Activated CD8-positive, alpha-beta T cell treated with anti-CD3 and anti-CD28 coated beads for 36 hours (primary cell): ENCODE measurements at regions of chr1 and their contacts with region 1.

Region 1: DNA sequence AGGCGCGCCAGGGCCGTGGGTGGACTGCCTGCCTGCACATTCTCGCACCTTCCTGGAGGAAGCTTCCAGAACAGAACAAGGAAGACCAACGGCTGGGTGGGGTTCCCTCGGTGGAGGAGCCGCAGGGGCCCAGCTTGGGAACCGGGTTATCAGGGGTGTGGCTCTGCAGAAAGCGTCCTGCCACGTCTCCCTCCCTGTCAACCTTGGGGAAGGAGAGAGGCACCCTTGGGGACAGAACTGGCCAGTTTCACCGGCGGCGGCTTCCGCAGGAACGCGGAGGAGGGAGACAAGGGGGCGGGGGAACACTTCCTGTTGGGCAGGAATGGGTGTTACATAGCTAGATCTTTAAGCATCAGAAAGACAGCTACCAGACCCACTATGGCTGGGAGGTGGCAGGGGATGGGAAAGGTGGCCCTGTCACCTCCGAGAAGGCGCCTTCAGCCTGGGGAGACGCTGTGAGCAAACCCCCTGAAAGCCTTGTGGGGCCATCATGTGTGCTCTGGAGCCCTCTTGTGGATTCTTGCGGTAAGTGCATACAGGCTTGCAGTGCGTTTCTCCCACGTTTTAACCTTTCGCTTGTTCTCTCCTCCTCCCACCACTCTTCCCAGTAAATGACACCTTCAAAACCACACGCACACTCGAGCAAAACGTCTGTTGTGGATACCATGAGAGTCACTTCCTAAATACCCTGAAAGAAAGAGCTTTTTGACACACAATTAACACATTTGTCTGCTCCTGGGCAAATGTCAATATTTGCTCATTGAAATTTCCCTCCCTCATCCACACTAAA is 3.8 kb upstream of the PLEKHA6 start:
- DNase-seq: peak; percentile 89
- ATAC-seq: peak; percentile 87
- H3K4me3 Mint-ChIP-seq: peak overlapping the region; percentile 51
- H3K27ac Mint-ChIP-seq: peak overlapping the region; percentile 80
- H3K4me1 Mint-ChIP-seq: peaks cover 46% of the 10 kb centered on the region
- H3K27me3 Mint-ChIP-seq: peaks cover 4% of the 10 kb centered on the region
- CTCF ChIP-seq: peak; percentile 95

Region 2: DNA sequence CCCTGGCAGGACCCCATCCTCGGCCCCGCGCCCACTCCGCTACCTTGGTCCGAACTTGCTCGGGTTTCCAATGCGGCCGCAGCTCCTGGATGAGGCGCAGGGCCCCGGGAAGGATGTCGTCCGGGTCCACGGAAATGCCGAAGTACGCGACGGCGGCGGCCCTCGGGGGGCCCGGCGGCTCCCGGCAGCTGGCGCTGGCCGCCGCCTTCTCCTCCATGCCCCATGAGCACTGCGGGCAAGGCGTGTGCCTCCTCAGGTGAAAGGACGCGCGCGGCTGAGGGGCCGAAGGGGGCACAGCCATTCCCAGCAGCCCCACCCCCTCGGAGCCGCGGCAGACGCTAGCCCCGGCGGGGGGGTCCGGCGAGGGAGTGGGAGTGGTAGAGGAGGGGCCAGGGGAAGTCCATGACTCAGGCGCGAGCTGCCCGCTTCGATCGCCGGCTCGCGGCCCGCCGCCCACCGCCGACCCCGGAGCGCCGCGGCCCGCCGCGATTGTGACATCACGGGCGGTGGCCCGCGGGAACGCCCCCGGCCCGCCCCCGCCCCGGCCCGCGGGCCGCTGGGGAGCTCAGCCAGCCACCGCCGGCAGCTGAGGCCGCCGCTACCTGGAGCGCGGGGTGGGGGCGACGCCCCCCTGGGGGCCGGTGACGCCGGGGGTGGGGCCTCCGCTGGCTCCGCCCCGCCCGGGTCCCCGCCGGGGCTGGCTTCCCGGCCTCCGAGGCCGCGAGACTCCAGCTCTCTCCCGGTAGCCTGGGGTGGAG is 211.8 kb before region 1 on chr1 and contains the start of gene ETNK2:
- CTCF ChIA-PET with region 1: interaction called, 19 read pairs
- POLR2A ChIA-PET with region 1: interaction called, 8 read pairs
- intact Hi-C with region 1: no loop called
- DNase-seq: peak; percentile 57
- ATAC-seq: peak; percentile 80
- H3K4me3 Mint-ChIP-seq: peak within 1 kb of the TSS; percentile 67
- H3K27ac Mint-ChIP-seq: no peak within 1 kb of the TSS
- H3K4me1 Mint-ChIP-seq: peaks cover 3% of the 10 kb centered on the region
- H3K27me3 Mint-ChIP-seq: no peaks in the 10 kb centered on the region
- CTCF ChIP-seq: no peak
- total RNA-seq, gene ETNK2: 1.3 to 1.4 TPM

Region 3: DNA sequence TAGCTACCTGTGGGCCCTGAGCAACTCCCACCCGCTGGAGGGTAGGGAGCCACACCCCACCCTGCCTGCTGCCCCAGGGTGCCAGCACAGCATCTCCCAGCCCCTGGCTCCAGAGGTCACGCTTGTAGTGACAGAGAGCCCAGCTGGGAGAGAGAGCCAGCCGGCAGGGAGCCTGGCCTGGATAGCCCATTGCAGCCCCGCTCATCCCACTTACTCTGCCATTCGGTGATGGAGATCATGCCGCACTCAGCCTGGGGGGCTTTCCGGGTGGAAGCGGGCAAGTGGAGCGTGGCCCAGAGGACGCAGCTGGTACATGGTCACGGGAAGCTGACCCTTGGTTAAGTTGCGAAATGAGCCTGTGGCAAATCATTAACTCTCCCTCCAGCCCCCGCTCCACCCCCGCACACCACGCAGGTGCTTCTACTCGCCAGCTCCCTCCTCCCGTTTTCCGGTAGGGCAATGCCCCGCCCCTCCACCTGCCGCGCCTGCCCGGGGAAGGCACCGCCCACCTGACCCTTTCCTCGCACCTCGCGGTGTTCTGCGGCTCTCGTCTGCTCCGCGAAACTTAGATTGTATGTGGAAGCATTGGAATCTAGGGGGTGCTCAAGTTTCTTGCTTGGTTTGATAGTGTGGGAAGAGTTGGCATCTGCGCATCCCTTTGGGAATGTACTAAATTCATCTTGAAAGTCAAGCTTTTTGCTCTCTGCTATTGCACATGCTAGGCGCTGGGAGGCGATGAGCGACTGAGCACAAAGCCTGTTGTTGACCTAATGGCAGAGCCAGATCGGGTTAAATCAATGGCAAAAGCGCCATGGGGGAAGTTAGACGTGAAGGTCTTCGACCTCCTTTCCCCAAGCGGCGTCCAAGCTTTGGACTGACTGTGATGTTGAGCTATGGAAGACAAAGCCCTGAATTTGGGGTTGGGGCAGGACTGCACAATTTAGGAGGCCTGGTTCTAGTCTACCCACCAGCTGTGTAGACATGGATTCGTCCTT is 149.6 kb before region 1 on chr1 and contains the start of gene GOLT1A:
- CTCF ChIA-PET with region 1: interaction called, 41 read pairs
- POLR2A ChIA-PET with region 1: no interaction called
- intact Hi-C with region 1: no loop called
- DNase-seq: peak; percentile 67
- ATAC-seq: peak; percentile 86
- H3K4me3 Mint-ChIP-seq: peak within 1 kb of the TSS; percentile 28
- H3K27ac Mint-ChIP-seq: no peak within 1 kb of the TSS
- H3K4me1 Mint-ChIP-seq: peaks cover 13% of the 10 kb centered on the region
- H3K27me3 Mint-ChIP-seq: peaks cover 3% of the 10 kb centered on the region
- CTCF ChIP-seq: peak; percentile 62
- total RNA-seq, gene GOLT1A: not detected

Region 4: GRCh38 chr1:204299814-204300365 is 63.6 kb before region 1 on chr1:
- CTCF ChIA-PET with region 1: interaction called, 10 read pairs
- POLR2A ChIA-PET with region 1: no interaction called
- intact Hi-C with region 1: no loop called
- DNase-seq: no peak
- ATAC-seq: no peak
- H3K4me3 Mint-ChIP-seq: no peak overlapping the region
- H3K27ac Mint-ChIP-seq: no peak overlapping the region
- H3K4me1 Mint-ChIP-seq: peaks cover 16% of the 10 kb centered on the region
- H3K27me3 Mint-ChIP-seq: peaks cover 13% of the 10 kb centered on the region
- CTCF ChIP-seq: no peak

Region 5: DNA sequence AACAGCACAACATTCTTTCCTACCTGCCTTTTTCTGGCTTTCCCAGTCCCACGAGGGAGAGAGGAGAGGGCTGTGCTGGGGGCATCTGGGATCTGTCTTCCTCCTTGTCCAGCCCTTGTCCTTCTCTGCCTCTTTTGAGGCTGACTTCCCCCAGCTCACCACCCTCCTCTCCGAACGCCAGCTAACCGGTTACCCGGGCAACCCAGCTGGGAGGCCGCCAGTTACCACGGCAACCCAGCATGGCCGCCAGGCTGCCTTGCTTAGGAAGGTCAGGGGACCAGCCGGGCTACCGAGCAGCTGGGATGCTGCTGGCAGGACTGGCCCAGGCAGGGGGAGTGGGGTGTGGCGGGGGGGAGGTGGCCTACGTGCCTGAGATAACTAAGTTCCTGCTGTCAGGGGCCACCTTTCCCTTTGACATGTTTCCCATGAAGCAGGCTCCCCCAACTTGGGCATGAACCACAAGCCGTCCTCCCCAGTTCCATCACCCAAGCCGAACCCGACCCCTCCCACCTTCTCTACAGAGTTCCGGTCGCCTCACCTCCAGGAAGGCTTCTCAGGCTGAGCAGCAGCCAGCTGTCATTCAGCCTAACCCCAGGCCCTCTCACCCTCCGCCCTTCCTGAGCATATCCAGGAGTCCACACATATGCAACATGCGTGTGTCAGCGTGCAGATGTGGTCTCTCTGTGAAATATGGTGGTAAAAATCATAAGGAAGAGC is 12.5 kb before region 1 on chr1:
- CTCF ChIA-PET with region 1: interaction called, 21 read pairs
- POLR2A ChIA-PET with region 1: interaction called, 3 read pairs
- intact Hi-C with region 1: no loop called
- DNase-seq: peak; percentile 34
- ATAC-seq: peak; percentile 52
- H3K4me3 Mint-ChIP-seq: no peak overlapping the region
- H3K27ac Mint-ChIP-seq: no peak overlapping the region
- H3K4me1 Mint-ChIP-seq: peaks cover 2% of the 10 kb centered on the region
- H3K27me3 Mint-ChIP-seq: no peaks in the 10 kb centered on the region
- CTCF ChIP-seq: no peak

Region 6: GRCh38 chr1:204398217-204399081 is 34.9 kb after region 1 on chr1:
- CTCF ChIA-PET with region 1: interaction called, 77 read pairs
- POLR2A ChIA-PET with region 1: no interaction called
- intact Hi-C with region 1: no loop called
- DNase-seq: peak; percentile 70
- ATAC-seq: peak; percentile 97
- H3K4me3 Mint-ChIP-seq: no peak overlapping the region
- H3K27ac Mint-ChIP-seq: peak overlapping the region; percentile 81
- H3K4me1 Mint-ChIP-seq: peaks cover 20% of the 10 kb centered on the region
- H3K27me3 Mint-ChIP-seq: no peaks in the 10 kb centered on the region
- CTCF ChIP-seq: peak; percentile 98